ENCODE measurements at regions of chr2 and their contacts with region 1.

Region 1: GRCh38 chr2:9984217-9984739 is 32.8 kb downstream of the GRHL1 start:
- DNase-seq: peak in 1 of 2 experiments; percentile 57
- H3K4me3 ChIP-seq: no peak overlapping the region
- H3K4me3 Mint-ChIP-seq: no peak overlapping the region
- H3K27ac Mint-ChIP-seq: no peak overlapping the region
- H3K4me1 ChIP-seq: no peaks in the 10 kb centered on the region
- H3K4me1 Mint-ChIP-seq: no peaks in the 10 kb centered on the region
- H3K27me3 ChIP-seq: no peaks in the 10 kb centered on the region
- H3K27me3 Mint-ChIP-seq: no peaks in the 10 kb centered on the region
- CTCF ChIP-seq: peak; percentile 57 to 72

Region 2: DNA sequence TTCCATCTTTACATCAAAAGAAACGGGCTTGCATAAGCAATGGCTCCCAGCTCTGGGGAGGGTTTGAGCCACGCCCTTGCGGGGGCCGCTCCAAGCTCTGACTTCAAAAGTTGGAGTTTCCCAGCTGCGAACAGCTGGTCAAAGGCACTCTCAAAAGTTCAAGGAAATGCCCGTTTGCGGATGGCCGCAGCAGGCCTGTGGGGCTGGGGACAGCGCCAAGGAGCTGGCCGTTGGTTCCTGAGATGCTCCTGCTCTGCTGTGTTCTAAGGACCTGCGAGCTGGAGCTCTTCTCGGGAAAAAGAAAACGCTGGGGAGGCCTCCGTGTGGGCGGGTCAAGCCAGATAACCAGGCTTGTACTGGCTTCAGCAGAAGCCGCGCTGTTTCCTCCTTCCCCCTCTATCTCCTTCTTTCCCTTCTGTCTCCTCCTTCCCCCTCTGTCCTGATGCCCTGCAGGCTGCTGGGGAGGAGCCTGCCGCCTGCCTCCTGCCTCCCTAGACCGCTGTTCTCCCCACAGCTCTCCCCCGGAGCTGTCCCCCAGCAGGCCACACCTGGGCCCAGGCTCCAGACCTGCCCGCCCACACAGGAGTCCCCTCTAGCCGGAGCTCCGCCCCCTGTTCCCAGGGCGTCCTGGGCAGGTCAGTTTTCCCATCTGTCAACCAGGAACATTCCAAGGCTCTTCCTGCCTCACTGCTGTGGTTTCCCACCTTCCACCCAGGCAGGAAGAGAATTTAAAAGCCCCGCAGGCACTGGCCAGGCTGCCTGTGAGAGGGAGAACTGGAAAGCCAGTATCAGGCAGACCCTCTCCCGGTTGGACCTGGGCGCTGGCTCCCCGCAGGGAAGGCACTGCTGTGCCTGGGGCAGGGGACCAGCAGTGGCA is 73.2 kb after region 1 on chr2:
- CTCF ChIA-PET with region 1: interaction called, 18 read pairs
- POLR2A ChIA-PET with region 1: no interaction called
- intact Hi-C with region 1: no loop called
- DNase-seq: peak; percentile 90 to 95
- H3K4me3 ChIP-seq: peak overlapping the region; percentile 37
- H3K4me3 Mint-ChIP-seq: peak overlapping the region; percentile 71
- H3K27ac Mint-ChIP-seq: peak overlapping the region; percentile 71
- H3K4me1 ChIP-seq: peaks cover 13% of the 10 kb centered on the region
- H3K4me1 Mint-ChIP-seq: peaks cover 14% of the 10 kb centered on the region
- H3K27me3 ChIP-seq: no peaks in the 10 kb centered on the region
- H3K27me3 Mint-ChIP-seq: no peaks in the 10 kb centered on the region
- CTCF ChIP-seq: no peak

Region 3: GRCh38 chr2:10079234-10079869 is 95.1 kb after region 1 on chr2:
- CTCF ChIA-PET with region 1: no interaction called
- POLR2A ChIA-PET with region 1: no interaction called
- intact Hi-C with region 1: no loop called
- DNase-seq: peak in 1 of 2 experiments; percentile 47
- H3K4me3 ChIP-seq: peak overlapping the region; percentile 55
- H3K4me3 Mint-ChIP-seq: peak overlapping the region; percentile 67
- H3K27ac Mint-ChIP-seq: no peak overlapping the region
- H3K4me1 ChIP-seq: peaks cover 11% of the 10 kb centered on the region; the same call in 1 of the 2 replicates
- H3K4me1 Mint-ChIP-seq: peaks cover 4% of the 10 kb centered on the region
- H3K27me3 ChIP-seq: no peaks in the 10 kb centered on the region
- H3K27me3 Mint-ChIP-seq: peaks cover 22% of the 10 kb centered on the region
- CTCF ChIP-seq: no peak